ENCODE measurements at regions of chr1 and their contacts with region 1.

Region 1: GRCh38 chr1:160006312-160006940 is 25.4 kb downstream of the PIGM start:
- DNase-seq: no peak
- ATAC-seq: peak; percentile 98
- H3K4me3 ChIP-seq: no peak overlapping the region
- H3K27ac ChIP-seq: no peak overlapping the region
- H3K4me1 ChIP-seq: no peaks in the 10 kb centered on the region
- H3K27me3 ChIP-seq: no peaks in the 10 kb centered on the region; a peak in 1 of 4 replicates
- CTCF ChIP-seq: peak; percentile 84 to 94 (median 94)
- EP300 ChIP-seq: no peak
- POLR2A ChIP-seq: no peak
- RAD21 ChIP-seq: peak; percentile 70

Region 2: DNA sequence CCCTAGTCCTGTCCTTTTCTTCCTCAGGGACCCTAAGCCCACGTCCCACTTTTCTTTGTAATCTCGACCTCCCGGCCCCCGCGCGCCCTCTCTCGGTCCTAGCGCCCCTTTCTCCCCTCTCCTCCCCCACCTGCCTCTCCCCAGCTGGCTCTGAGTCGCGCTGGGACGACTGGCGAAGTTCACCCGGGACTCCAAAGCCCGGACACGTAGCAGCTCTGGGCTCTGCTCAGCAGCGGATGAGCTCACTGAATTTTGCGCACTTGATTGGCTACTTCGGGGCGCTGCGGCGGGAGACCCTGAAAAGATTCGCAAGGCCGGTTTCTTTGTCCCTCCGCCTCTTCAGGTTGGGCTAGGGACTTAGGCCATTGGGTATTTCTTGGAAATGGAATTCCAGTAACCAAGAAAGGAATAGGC is 818.0 kb before region 1 on chr1:
- CTCF ChIA-PET with region 1: no interaction called
- POLR2A ChIA-PET with region 1: no interaction called
- RAD21 ChIA-PET with region 1: no interaction called
- SMC1A ChIA-PET with region 1: no interaction called
- in situ Hi-C with region 1: no loop called
- intact Hi-C with region 1: no loop called
- DNase-seq: no peak
- ATAC-seq: peak; percentile 91
- H3K4me3 ChIP-seq: no peak overlapping the region
- H3K27ac ChIP-seq: no peak overlapping the region
- H3K4me1 ChIP-seq: no peaks in the 10 kb centered on the region
- H3K27me3 ChIP-seq: peaks cover 4 to 6% of the 10 kb centered on the region in 2 experiments; a peak in 2 of 4 replicates
- CTCF ChIP-seq: no peak
- EP300 ChIP-seq: no peak
- POLR2A ChIP-seq: no peak
- RAD21 ChIP-seq: no peak

Region 3: GRCh38 chr1:159214149-159214760 is 792.2 kb before region 1 on chr1:
- CTCF ChIA-PET with region 1: interaction called, 34 read pairs
- POLR2A ChIA-PET with region 1: no interaction called
- RAD21 ChIA-PET with region 1: no interaction called
- SMC1A ChIA-PET with region 1: interaction called, 3 read pairs
- in situ Hi-C with region 1: no loop called
- intact Hi-C with region 1: loop called (anchors 5 kb)
- DNase-seq: no peak
- ATAC-seq: peak; percentile 81
- H3K4me3 ChIP-seq: no peak overlapping the region
- H3K27ac ChIP-seq: no peak overlapping the region
- H3K4me1 ChIP-seq: no peaks in the 10 kb centered on the region; the same call in 1 of the 2 replicates
- H3K27me3 ChIP-seq: peaks cover 1 to 6% of the 10 kb centered on the region in 2 experiments
- CTCF ChIP-seq: peak; percentile 86 to 88 (median 88)
- EP300 ChIP-seq: no peak
- POLR2A ChIP-seq: no peak
- RAD21 ChIP-seq: peak; percentile 78

Region 4: GRCh38 chr1:159839116-159839849 is 167.1 kb before region 1 on chr1:
- CTCF ChIA-PET with region 1: interaction called, 13 read pairs
- POLR2A ChIA-PET with region 1: no interaction called
- RAD21 ChIA-PET with region 1: interaction called, 3 read pairs
- SMC1A ChIA-PET with region 1: interaction called, 5 read pairs
- in situ Hi-C with region 1: no loop called
- intact Hi-C with region 1: no loop called
- DNase-seq: peak; percentile 36
- ATAC-seq: peak; percentile 88
- H3K4me3 ChIP-seq: no peak overlapping the region; the same call in 1 of the 2 replicates
- H3K27ac ChIP-seq: peak overlapping the region; percentile 68
- H3K4me1 ChIP-seq: peaks cover 26% of the 10 kb centered on the region
- H3K27me3 ChIP-seq: peaks cover 0 to 4% of the 10 kb centered on the region in 2 experiments; a peak in 1 of 4 replicates
- CTCF ChIP-seq: no peak
- EP300 ChIP-seq: no peak
- POLR2A ChIP-seq: no peak
- RAD21 ChIP-seq: no peak

Region 5: GRCh38 chr1:159936273-159936904 is 70.0 kb before region 1 on chr1:
- CTCF ChIA-PET with region 1: interaction called, 422 read pairs
- POLR2A ChIA-PET with region 1: interaction called, 3 read pairs
- RAD21 ChIA-PET with region 1: interaction called, 113 read pairs
- SMC1A ChIA-PET with region 1: interaction called, 122 read pairs
- in situ Hi-C with region 1: loop called (anchors 5 kb)
- intact Hi-C with region 1: loop called (anchors 1 kb)
- DNase-seq: no peak
- ATAC-seq: peak; percentile 86
- H3K4me3 ChIP-seq: no peak overlapping the region
- H3K27ac ChIP-seq: no peak overlapping the region
- H3K4me1 ChIP-seq: peaks cover 23% of the 10 kb centered on the region
- H3K27me3 ChIP-seq: 0 out of 4 replicates have a peak, but pooled peaks cover 0 to 2% of the 10 kb centered on the region in 2 experiments
- CTCF ChIP-seq: peak; percentile 98; a peak in 5 of 6 replicates
- EP300 ChIP-seq: no peak
- POLR2A ChIP-seq: no peak
- RAD21 ChIP-seq: peak; percentile 87

Region 6: DNA sequence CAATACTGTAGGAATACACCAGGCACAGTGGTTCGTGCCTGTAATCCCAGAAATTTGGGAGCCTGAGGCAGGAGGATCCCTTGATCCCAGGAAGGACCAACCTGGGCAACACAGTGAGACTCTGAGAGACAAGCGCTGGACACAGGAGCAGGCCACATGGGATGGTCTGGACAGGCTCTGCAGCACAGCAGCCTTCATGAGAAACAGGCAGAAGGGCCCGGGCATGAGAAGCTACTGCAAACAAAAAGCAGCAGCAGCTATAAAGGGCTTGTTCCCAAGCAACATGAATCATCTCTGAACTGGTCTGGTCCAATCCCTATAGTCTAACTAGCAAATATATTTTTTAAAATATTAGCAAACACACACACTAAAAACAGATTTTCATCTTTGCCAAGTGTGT is 16.8 kb before region 1 on chr1:
- CTCF ChIA-PET with region 1: interaction called, 27 read pairs
- POLR2A ChIA-PET with region 1: interaction called, 3 read pairs
- RAD21 ChIA-PET with region 1: interaction called, 5 read pairs
- SMC1A ChIA-PET with region 1: interaction called, 5 read pairs
- in situ Hi-C with region 1: no loop called
- intact Hi-C with region 1: no loop called
- DNase-seq: no peak
- ATAC-seq: no peak
- H3K4me3 ChIP-seq: no peak overlapping the region
- H3K27ac ChIP-seq: no peak overlapping the region
- H3K4me1 ChIP-seq: no peaks in the 10 kb centered on the region
- H3K27me3 ChIP-seq: peaks cover 0 to 2% of the 10 kb centered on the region in 2 experiments; a peak in 1 of 4 replicates
- CTCF ChIP-seq: no peak
- EP300 ChIP-seq: no peak
- POLR2A ChIP-seq: no peak
- RAD21 ChIP-seq: no peak

Region 7: DNA sequence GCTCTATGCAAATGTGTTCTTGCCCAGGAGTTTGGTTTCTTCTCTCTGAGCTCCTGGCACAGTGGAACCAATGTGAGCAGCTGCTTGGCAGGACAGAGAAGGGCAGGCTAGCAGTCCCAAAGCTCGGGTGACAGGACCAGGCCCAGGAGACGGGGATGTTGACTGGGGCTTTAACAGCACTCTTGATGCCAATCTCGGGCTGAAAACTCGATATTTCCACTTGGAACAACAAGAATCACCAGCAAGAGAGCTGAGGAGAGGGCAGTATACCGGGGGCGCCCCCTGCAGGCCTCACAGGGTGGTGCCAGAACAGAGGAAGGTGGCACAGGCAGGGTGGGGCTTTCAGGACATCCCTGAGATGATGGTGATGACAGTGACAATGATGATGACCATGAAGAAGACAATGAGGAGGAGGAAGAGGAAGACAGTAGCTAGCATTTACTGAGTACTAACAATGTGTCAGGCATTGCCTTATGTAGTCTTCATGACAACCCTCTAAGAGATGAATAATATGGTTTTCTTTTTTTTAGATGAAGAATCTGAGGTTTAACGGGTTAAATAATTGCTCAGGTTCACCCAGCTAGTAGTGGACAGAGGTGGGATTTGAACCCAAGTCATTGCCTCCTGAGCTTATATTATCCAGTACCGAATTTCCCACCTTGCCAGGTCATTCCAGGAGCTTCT is 72.2 kb after region 1 on chr1:
- CTCF ChIA-PET with region 1: interaction called, 49 read pairs
- POLR2A ChIA-PET with region 1: no interaction called
- RAD21 ChIA-PET with region 1: interaction called, 6 read pairs
- SMC1A ChIA-PET with region 1: interaction called, 14 read pairs
- in situ Hi-C with region 1: no loop called
- intact Hi-C with region 1: no loop called
- DNase-seq: no peak
- ATAC-seq: peak; percentile 96
- H3K4me3 ChIP-seq: no peak overlapping the region
- H3K27ac ChIP-seq: no peak overlapping the region
- H3K4me1 ChIP-seq: no peaks in the 10 kb centered on the region; the same call in 1 of the 2 replicates
- H3K27me3 ChIP-seq: peaks cover 0 to 2% of the 10 kb centered on the region in 2 experiments; a peak in 3 of 4 replicates
- CTCF ChIP-seq: peak; percentile 78 to 97 (median 92)
- EP300 ChIP-seq: no peak
- POLR2A ChIP-seq: no peak
- RAD21 ChIP-seq: peak; percentile 78

Measured in GM12878 (cell line).